Activated CD8-positive, alpha-beta memory T cell treated with anti-CD3 and anti-CD28 coated beads, Interleukin-2, amount 10 ng/mL, durations not matched to agents 7 days and 5 days (primary cell): ENCODE measurements at regions of chr7 and their contacts with region 1.

Region 1: DNA sequence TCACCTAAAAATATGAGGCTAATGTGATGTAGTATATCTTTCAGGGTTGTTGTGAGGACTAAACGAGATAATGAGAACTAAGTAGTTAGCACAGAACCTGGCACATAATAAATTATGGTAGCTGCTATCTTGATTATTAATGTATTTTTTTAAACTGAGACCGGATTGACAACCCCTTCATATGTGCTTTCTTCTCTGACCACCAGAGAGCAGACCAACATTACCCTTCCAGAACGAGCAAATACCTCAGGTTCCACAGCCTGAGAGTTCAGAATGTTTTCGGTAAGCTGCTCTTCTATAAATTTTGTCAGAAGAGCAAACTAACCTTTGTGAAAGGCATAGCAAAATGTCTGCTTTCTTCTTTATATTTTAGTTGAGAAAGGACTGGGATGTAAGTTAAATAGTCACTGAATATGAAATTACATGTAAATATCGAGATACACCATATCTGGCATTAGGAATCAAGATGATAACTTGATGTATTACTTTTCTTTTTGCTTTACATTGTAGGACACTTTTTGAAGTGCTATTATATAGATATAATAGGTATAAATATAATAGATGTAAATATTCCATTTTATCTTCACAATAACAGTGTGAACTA is 13.6 kb upstream of the BPGM start:
- DNase-seq: peak; percentile 51
- ATAC-seq: peak; percentile 59
- H3K4me3 Mint-ChIP-seq: no peak overlapping the region
- H3K27ac Mint-ChIP-seq: no peak overlapping the region
- H3K4me1 Mint-ChIP-seq: peaks cover 34% of the 10 kb centered on the region
- H3K27me3 Mint-ChIP-seq: peaks cover 17% of the 10 kb centered on the region

Region 2: GRCh38 chr7:134403677-134404076 is 229.4 kb before region 1 on chr7:
- CTCF ChIA-PET with region 1: no interaction called
- DNase-seq: no peak
- ATAC-seq: no peak
- H3K4me3 Mint-ChIP-seq: no peak overlapping the region
- H3K27ac Mint-ChIP-seq: no peak overlapping the region
- H3K4me1 Mint-ChIP-seq: no peaks in the 10 kb centered on the region
- H3K27me3 Mint-ChIP-seq: peaks cover 20% of the 10 kb centered on the region

Region 3: DNA sequence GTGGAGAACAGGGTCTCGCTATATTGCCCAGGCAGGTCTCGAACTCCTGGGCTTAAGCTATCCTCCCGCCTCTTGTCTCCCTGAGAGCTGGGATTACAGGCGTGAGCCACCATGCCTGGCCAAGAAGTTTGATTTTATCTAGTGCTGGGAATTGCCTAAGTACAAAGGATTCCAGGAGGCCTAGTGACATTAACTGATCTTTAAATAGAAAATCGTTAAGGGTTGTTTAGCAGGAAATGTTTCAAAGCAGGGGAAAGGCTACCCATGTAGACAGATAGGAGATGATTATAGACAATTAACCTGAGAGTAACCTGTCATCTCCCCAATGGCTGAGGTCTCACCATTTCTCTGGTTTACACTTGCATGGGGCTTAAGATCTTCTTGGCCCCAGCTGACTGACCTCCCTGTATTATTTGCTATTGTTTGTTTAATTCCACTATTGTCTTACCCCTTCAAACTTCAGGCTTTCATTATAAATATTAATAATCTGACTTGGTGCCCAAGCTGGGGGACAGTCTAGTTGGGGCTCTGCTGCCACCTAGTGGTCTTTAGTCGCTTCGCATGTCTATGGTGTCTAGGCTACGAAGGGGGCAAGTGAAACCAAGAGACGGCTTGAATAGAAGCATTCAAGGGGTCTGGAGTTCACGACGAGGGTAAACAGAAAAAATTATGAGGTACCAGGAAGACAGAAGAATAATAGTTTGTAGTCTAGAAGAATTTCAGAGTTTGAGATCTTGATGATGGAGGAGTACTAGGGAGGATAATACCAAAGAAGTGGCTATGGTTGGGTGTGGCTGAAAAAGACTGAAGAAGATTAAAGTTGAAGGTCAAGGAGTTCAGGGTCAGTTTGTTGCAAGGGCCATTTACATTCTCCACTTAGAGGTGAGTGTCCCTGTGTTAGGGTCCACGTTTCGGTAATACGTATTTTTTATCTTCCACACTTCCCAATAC is 26.8 kb before region 1 on chr7:
- CTCF ChIA-PET with region 1: interaction called, 10 read pairs
- DNase-seq: peak; percentile 73
- ATAC-seq: peak; percentile 93
- H3K4me3 Mint-ChIP-seq: peak overlapping the region; percentile 59
- H3K27ac Mint-ChIP-seq: no peak overlapping the region
- H3K4me1 Mint-ChIP-seq: peaks cover 10% of the 10 kb centered on the region
- H3K27me3 Mint-ChIP-seq: peaks cover 63% of the 10 kb centered on the region

Region 4: DNA sequence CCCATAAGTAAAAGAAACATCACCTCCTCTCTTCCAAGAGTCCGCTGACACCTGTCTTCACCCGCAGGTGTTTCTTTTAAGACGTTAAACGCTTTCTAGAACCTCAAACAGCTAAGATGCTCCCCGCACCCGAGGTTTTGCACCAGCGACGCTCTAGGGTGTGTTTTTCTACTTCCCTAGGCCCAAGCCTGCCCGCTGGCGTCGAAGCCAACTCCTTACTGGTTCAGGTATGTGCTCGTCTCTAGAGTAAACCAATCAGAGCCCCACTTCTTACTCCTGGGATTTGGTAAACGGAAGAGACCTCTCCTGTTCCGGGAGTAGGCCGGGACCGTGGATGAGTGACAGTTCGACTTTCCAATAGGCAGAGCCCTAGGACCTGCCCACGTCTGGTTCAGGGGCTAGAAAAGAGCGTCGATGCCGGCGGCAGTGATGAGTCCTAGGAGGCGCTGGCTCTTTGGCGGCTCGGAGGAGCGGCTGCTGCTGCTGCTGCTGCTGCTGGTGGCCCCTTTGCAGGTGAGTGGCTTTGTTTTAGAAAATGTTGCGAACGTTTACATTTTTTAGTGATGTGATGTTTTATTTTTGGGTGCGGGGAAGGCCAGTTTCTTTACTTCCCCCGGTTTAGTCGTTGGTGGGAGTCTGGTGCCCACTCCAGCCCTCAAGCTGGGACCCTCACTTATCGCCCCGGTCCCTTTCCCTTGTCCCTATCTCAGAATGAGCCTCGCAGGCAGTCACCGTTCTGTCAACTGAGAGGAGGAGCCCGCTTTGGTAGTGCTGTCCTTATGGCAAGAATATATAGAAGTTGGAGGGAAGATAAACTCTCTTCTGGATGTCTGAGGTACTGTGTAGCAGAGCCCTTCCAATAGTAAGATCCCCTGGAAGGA is 13.6 kb after region 1 on chr7 and contains the start of gene BPGM:
- CTCF ChIA-PET with region 1: interaction called, 41 read pairs
- DNase-seq: peak; percentile 98
- ATAC-seq: peak; percentile 99
- H3K4me3 Mint-ChIP-seq: no peak within 1 kb of the TSS
- H3K27ac Mint-ChIP-seq: no peak within 1 kb of the TSS
- H3K4me1 Mint-ChIP-seq: peaks cover 35% of the 10 kb centered on the region
- H3K27me3 Mint-ChIP-seq: no peaks in the 10 kb centered on the region
- total RNA-seq, gene BPGM: 18.6 to 19.7 TPM

Region 5: GRCh38 chr7:134701272-134701671 is 68.2 kb after region 1 on chr7:
- CTCF ChIA-PET with region 1: interaction called, 65 read pairs
- DNase-seq: no peak
- ATAC-seq: no peak
- H3K4me3 Mint-ChIP-seq: no peak overlapping the region
- H3K27ac Mint-ChIP-seq: no peak overlapping the region
- H3K4me1 Mint-ChIP-seq: no peaks in the 10 kb centered on the region
- H3K27me3 Mint-ChIP-seq: peaks cover 10% of the 10 kb centered on the region